HCT116 (cell line): ENCODE measurements at regions of chr13 and their contacts with region 1.

Region 1: DNA sequence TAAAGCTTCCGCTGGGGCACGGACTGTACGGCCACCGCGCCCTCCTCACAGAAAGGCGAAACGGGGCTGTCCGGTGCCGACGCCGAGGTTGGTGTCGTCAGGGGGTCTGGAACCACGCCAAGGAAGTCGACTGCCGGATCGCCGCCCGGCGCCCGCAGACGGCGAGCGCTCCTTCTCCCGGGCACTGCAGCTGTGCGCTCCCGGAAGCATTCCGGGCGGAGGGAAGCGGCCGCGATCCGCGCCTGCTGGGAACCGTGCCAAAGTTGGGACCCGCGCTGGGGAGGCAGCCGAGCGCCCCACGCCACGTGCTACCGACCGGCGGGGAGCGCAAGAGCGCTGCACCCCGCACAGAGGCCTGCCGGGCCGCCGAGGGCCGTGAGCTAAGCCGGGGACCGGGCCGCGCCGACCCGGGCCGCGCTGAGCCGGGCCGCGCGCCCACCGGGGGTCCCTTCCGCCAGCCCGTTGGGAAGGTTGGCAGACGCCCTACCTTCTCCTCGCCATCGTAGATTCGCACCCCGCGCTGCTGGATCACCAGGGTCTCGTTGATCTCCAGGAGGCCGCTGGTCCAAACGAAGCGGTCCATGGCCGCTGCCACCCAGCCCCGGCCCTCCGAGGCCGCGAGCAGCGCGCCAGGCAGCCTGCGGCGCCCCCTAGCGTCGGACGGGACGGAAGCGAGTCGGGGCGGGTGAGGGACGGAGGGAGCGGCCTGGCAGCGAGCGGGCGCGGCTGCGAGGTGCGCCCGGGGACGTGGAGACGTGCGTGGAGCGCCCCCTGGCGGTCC is at the start of gene VPS36:
- DNase-seq: peak; percentile 88
- ATAC-seq: peak; percentile 82
- H3K4me3 ChIP-seq: peak within 1 kb of the TSS; percentile 74 to 84
- H3K27ac ChIP-seq: peak within 1 kb of the TSS; percentile 98
- H3K4me1 ChIP-seq: peaks cover 22 to 37% of the 10 kb centered on the region in 2 experiments
- H3K27me3 ChIP-seq: no peaks in the 10 kb centered on the region
- CTCF ChIP-seq: peak in 2 of 3 experiments; percentile 95 to 97; a peak in 4 of 6 replicates
- POLR2A ChIP-seq: no peak
- RAD21 ChIP-seq: no peak
- total RNA-seq, gene VPS36: 34.8 TPM

Region 2: GRCh38 chr13:51714663-51715168 is 735.5 kb before region 1 on chr13:
- CTCF ChIA-PET with region 1: no interaction called
- POLR2A ChIA-PET with region 1: no interaction called
- RAD21 ChIA-PET with region 1: no interaction called
- intact Hi-C with region 1: no loop called
- DNase-seq: no peak
- ATAC-seq: peak; percentile 70
- H3K4me3 ChIP-seq: no peak overlapping the region
- H3K27ac ChIP-seq: no peak overlapping the region; the same call in 1 of the 2 replicates
- H3K4me1 ChIP-seq: peaks cover 3 to 16% of the 10 kb centered on the region in 2 experiments; a peak in 2 of 4 replicates
- H3K27me3 ChIP-seq: no peaks in the 10 kb centered on the region
- CTCF ChIP-seq: no peak
- POLR2A ChIP-seq: no peak
- RAD21 ChIP-seq: no peak

Region 3: DNA sequence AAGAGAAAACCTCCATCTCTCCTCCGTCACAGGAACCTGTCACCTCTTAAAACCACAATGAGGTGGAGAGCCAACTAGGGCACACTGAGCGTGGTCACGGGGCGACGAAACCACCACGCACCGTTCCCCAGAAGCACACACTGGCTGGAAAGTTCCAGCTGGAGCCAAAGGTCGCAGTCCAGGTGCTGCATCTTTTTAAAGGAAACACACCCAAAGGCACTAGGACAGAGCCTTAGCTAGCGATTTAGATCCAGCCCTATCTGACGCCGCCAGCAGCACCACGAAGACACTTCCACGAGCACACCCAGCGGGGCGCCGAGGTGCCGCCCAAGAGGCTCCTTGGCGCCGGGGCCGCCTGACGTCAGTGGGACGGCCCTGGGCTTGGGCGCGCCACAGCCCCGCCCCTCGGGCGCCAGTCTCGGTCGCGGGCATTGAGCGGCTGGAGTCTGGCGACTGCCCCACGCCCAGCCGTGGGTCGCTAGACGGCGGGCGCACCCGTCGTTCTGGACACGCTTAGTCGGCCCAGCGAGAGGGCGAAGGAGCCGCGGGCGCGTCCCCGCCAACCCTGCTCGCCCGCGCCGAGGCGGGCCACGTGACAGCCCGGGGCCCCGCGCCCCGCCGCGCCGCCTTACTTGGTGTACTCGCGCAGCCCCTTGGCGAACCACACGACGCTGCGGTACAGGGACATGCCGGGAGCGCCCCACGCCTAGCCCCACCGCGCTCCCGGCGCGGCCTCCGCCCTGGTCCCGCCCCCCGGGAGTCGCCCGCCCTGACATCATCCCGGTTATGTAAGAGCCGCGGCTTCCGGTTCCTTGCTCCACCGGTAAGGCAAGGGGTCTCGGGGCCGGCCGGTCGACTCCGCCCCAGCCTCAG is 646.5 kb before region 1 on chr13 and contains the start of gene DHRS12:
- CTCF ChIA-PET with region 1: no interaction called
- POLR2A ChIA-PET with region 1: no interaction called
- RAD21 ChIA-PET with region 1: no interaction called
- intact Hi-C with region 1: loop called (anchors 5 kb)
- DNase-seq: peak; percentile 43
- ATAC-seq: peak; percentile 87
- H3K4me3 ChIP-seq: peak within 1 kb of the TSS; percentile 74 to 78
- H3K27ac ChIP-seq: peak within 1 kb of the TSS; percentile 98
- H3K4me1 ChIP-seq: peaks cover 22 to 34% of the 10 kb centered on the region in 2 experiments
- H3K27me3 ChIP-seq: no peaks in the 10 kb centered on the region
- CTCF ChIP-seq: no peak
- POLR2A ChIP-seq: peak; percentile 59
- RAD21 ChIP-seq: no peak
- total RNA-seq, gene DHRS12: 3.9 TPM

Region 4: DNA sequence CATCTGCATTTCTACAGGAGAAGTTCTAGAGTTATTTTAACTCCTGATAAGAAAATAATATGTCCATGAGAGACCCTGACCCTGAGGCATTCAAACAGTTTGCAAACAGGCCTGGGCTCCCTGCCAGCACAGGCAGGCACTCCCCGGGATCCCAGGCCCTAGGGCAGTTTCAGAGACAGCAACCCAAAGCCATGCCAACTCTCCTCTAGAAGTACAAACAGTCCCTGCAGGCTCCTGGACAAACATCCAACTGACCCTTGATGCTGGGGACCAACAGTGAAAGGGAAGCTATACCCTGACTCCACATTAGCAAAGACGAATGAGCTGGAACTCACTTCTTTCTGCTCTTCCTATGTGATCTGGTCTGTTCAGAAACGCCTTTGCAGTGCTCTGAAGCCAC is 543.6 kb before region 1 on chr13:
- CTCF ChIA-PET with region 1: no interaction called
- POLR2A ChIA-PET with region 1: no interaction called
- RAD21 ChIA-PET with region 1: no interaction called
- intact Hi-C with region 1: no loop called
- DNase-seq: no peak
- ATAC-seq: no peak
- H3K4me3 ChIP-seq: no peak overlapping the region
- H3K27ac ChIP-seq: no peak overlapping the region
- H3K4me1 ChIP-seq: no peaks in the 10 kb centered on the region
- H3K27me3 ChIP-seq: 0 out of 2 replicates have a peak, but pooled peaks cover 2% of the 10 kb centered on the region
- CTCF ChIP-seq: no peak
- POLR2A ChIP-seq: no peak
- RAD21 ChIP-seq: no peak

Region 5: DNA sequence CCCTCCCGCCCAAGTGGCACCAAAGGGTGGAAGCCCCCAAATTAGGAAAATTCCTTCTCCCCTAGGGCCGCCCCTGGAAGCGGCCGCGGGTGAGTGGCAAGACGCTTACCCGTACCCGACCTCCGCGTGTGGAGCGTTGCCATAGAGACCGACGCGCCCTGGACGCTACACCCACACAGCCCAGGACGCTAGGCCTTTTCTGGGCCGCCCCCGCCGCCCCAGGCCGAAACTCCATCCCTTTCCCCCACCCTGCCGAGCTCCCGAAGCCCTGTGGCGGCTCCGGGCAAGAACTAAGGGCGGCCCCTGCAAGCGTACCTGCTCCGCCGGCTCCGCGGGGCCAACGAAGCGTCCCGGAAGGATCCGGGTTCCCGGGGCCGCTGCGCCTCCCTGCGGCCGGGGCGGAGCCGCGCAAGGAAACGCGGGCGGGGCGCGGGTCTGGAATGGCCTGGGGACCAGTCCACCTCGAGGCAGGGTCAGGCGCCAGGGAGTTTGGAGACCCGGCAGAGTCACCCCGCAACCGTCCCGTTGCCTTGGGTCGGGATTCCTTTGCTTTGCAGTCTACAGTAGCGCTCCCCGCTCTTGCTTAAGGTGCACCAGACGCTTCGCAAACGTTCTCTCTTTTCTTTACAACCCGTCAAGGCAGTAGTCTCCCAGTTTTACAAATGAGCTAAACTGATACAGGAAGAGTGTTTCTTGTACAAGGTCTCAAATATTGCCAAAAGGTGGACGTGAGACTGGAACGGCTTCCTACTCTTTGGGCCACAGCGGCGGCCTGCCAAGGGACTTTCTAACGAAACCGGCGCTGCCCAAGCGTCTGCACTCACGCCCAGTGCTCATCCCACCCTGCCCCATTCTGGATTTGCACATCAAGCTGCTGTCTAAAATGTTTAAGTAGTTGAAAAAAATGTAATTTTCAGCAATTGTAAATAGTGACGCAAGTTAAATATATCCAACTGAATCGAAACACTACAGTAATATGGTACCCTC is 321.2 kb before region 1 on chr13 and contains the start of gene NEK5:
- CTCF ChIA-PET with region 1: interaction called, 11 read pairs
- POLR2A ChIA-PET with region 1: no interaction called
- RAD21 ChIA-PET with region 1: no interaction called
- intact Hi-C with region 1: no loop called
- DNase-seq: peak; percentile 27
- ATAC-seq: peak; percentile 88
- H3K4me3 ChIP-seq: peak within 1 kb of the TSS; percentile 60 to 69
- H3K27ac ChIP-seq: no peak within 1 kb of the TSS
- H3K4me1 ChIP-seq: peaks cover 10 to 20% of the 10 kb centered on the region in 2 experiments; a peak in 3 of 4 replicates
- H3K27me3 ChIP-seq: no peaks in the 10 kb centered on the region
- CTCF ChIP-seq: peak; percentile 57 to 83 (median 61); a peak in 5 of 6 replicates
- POLR2A ChIP-seq: no peak
- RAD21 ChIP-seq: peak; percentile 61
- total RNA-seq, gene NEK5: 1.5 TPM

Region 6: GRCh38 chr13:52344108-52344507 is 106.1 kb before region 1 on chr13:
- CTCF ChIA-PET with region 1: interaction called, 43 read pairs
- POLR2A ChIA-PET with region 1: interaction called, 12 read pairs
- RAD21 ChIA-PET with region 1: interaction called, 3 to 11 read pairs
- intact Hi-C with region 1: loop called (anchors 1 kb)
- DNase-seq: no peak
- ATAC-seq: no peak
- H3K4me3 ChIP-seq: no peak overlapping the region
- H3K27ac ChIP-seq: no peak overlapping the region
- H3K4me1 ChIP-seq: peaks cover 17% of the 10 kb centered on the region in 2 experiments
- H3K27me3 ChIP-seq: no peaks in the 10 kb centered on the region
- CTCF ChIP-seq: no peak
- POLR2A ChIP-seq: no peak
- RAD21 ChIP-seq: no peak

Region 7: GRCh38 chr13:52652196-52652979 is 202.2 kb after region 1 on chr13 and contains the start of gene SUGT1:
- CTCF ChIA-PET with region 1: no interaction called
- POLR2A ChIA-PET with region 1: no interaction called
- RAD21 ChIA-PET with region 1: no interaction called
- intact Hi-C with region 1: loop called (anchors 2 kb)
- DNase-seq: peak; percentile 96
- ATAC-seq: peak; percentile 97
- H3K4me3 ChIP-seq: peak within 1 kb of the TSS; percentile 93 to 99
- H3K27ac ChIP-seq: peak within 1 kb of the TSS; percentile 92
- H3K4me1 ChIP-seq: peaks cover 4 to 14% of the 10 kb centered on the region in 2 experiments; a peak in 3 of 4 replicates
- H3K27me3 ChIP-seq: no peaks in the 10 kb centered on the region
- CTCF ChIP-seq: peak in 2 of 3 experiments; percentile 65 to 70; a peak in 4 of 6 replicates
- POLR2A ChIP-seq: no peak
- RAD21 ChIP-seq: no peak
- total RNA-seq, gene SUGT1: 75.6 TPM